CD8-positive, alpha-beta T cell (primary cell): ENCODE measurements at regions of chr9 and their contacts with region 1.

Region 1: DNA sequence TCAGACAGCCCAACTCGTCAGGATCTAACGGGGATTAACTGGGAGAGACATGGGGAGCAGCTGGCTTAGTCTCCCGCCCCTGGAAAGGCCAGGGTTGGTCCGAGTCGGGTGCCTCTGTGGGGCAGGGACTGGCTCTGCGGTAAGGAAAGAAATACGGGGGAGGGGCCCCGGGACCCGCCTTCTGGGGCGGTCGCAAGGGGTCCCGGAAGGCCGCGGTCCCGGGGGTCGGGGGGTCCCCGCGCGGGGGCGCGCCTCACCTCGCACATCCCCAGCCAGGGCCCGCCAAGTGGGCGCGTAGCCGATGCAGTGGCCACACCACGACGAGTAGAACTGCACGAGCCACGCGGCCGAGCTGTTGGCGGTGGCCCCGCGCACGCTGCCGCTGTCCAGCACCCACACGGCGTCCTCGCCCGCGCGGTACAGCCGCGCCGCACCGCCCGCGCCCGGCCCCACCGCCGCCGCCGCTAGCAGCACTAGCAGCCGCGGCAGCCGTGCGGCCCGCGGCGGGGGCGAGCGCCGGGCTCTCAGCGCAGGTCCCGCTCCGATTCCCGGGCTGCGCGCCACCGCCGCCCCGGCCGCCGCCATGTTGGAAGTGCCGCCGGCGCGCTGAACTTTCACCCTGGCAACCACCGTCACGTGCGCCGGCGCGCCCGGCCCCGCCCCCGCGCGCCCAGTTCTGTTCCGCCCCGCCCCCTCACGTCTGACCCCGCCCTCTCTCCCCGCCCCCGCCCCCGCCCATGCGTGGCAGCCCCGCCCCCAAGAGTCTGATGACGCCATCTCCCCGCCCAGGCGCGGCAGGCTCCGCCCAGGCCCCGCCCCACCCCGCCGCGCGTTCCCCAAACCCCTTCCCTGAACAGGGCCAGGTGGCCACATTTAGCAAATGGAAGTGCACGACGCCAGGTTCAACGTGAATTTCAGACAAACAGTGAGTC is at the start of gene QSOX2:
- DNase-seq: peak; percentile 69 to 93 (median 82)
- ATAC-seq: peak; percentile 84
- H3K4me3 ChIP-seq: peak within 1 kb of the TSS; percentile 40 to 60
- H3K4me3 Mint-ChIP-seq: peak within 1 kb of the TSS; percentile 91
- H3K27ac ChIP-seq: peak within 1 kb of the TSS; percentile 33 to 37
- H3K27ac Mint-ChIP-seq: peak within 1 kb of the TSS; percentile 85
- H3K4me1 ChIP-seq: peaks cover 35% of the 10 kb centered on the region
- H3K4me1 Mint-ChIP-seq: peaks cover 32% of the 10 kb centered on the region
- H3K27me3 ChIP-seq: no peaks in the 10 kb centered on the region
- H3K27me3 Mint-ChIP-seq: no peaks in the 10 kb centered on the region
- CTCF ChIP-seq: no peak
- total RNA-seq, gene QSOX2: 13.8 to 14.2 TPM

Region 2: GRCh38 chr9:135811801-135812200 is 433.7 kb before region 1 on chr9:
- CTCF ChIA-PET with region 1: no interaction called
- POLR2A ChIA-PET with region 1: no interaction called
- intact Hi-C with region 1: no loop called
- DNase-seq: no peak
- ATAC-seq: no peak
- H3K4me3 ChIP-seq: no peak overlapping the region
- H3K4me3 Mint-ChIP-seq: no peak overlapping the region
- H3K27ac ChIP-seq: no peak overlapping the region
- H3K27ac Mint-ChIP-seq: no peak overlapping the region
- H3K4me1 ChIP-seq: peaks cover 3% of the 10 kb centered on the region
- H3K4me1 Mint-ChIP-seq: peaks cover 3% of the 10 kb centered on the region
- H3K27me3 ChIP-seq: no peaks in the 10 kb centered on the region
- H3K27me3 Mint-ChIP-seq: no peaks in the 10 kb centered on the region
- CTCF ChIP-seq: no peak

Region 3: GRCh38 chr9:135907431-135908092 is 337.9 kb before region 1 on chr9 and contains the start of gene CAMSAP1:
- CTCF ChIA-PET with region 1: no interaction called
- POLR2A ChIA-PET with region 1: no interaction called
- intact Hi-C with region 1: loop called (anchors 1 to 5 kb)
- DNase-seq: peak; percentile 90 to 98 (median 96)
- ATAC-seq: peak; percentile 87
- H3K4me3 ChIP-seq: peak within 1 kb of the TSS; percentile 67 to 78
- H3K4me3 Mint-ChIP-seq: peak within 1 kb of the TSS; percentile 88
- H3K27ac ChIP-seq: peak within 1 kb of the TSS; percentile 21 to 71
- H3K27ac Mint-ChIP-seq: peak within 1 kb of the TSS; percentile 86
- H3K4me1 ChIP-seq: peaks cover 27% of the 10 kb centered on the region
- H3K4me1 Mint-ChIP-seq: peaks cover 48% of the 10 kb centered on the region
- H3K27me3 ChIP-seq: no peaks in the 10 kb centered on the region
- H3K27me3 Mint-ChIP-seq: no peaks in the 10 kb centered on the region
- CTCF ChIP-seq: no peak
- total RNA-seq, gene CAMSAP1: 16.4 to 20.8 TPM

Region 4: GRCh38 chr9:136109351-136110081 is 136.0 kb before region 1 on chr9:
- CTCF ChIA-PET with region 1: no interaction called
- POLR2A ChIA-PET with region 1: no interaction called
- intact Hi-C with region 1: loop called in 1 of 2 experiments (anchors 5 kb)
- DNase-seq: peak; percentile 77 to 95 (median 92)
- ATAC-seq: peak; percentile 91
- H3K4me3 ChIP-seq: peak overlapping the region; percentile 58 to 65
- H3K4me3 Mint-ChIP-seq: peak overlapping the region; percentile 83
- H3K27ac ChIP-seq: peak overlapping the region; percentile 28 to 84
- H3K27ac Mint-ChIP-seq: peak overlapping the region; percentile 84
- H3K4me1 ChIP-seq: peaks cover 93% of the 10 kb centered on the region
- H3K4me1 Mint-ChIP-seq: peaks cover 73% of the 10 kb centered on the region
- H3K27me3 ChIP-seq: no peaks in the 10 kb centered on the region
- H3K27me3 Mint-ChIP-seq: no peaks in the 10 kb centered on the region
- CTCF ChIP-seq: no peak

Region 5: GRCh38 chr9:136160381-136160841 is 85.1 kb before region 1 on chr9:
- CTCF ChIA-PET with region 1: no interaction called
- POLR2A ChIA-PET with region 1: no interaction called
- intact Hi-C with region 1: no loop called
- DNase-seq: no peak
- ATAC-seq: no peak
- H3K4me3 ChIP-seq: no peak overlapping the region
- H3K4me3 Mint-ChIP-seq: no peak overlapping the region
- H3K27ac ChIP-seq: no peak overlapping the region
- H3K27ac Mint-ChIP-seq: no peak overlapping the region
- H3K4me1 ChIP-seq: no peaks in the 10 kb centered on the region
- H3K4me1 Mint-ChIP-seq: no peaks in the 10 kb centered on the region
- H3K27me3 ChIP-seq: no peaks in the 10 kb centered on the region
- H3K27me3 Mint-ChIP-seq: peaks cover 18% of the 10 kb centered on the region
- CTCF ChIP-seq: no peak

Region 6: DNA sequence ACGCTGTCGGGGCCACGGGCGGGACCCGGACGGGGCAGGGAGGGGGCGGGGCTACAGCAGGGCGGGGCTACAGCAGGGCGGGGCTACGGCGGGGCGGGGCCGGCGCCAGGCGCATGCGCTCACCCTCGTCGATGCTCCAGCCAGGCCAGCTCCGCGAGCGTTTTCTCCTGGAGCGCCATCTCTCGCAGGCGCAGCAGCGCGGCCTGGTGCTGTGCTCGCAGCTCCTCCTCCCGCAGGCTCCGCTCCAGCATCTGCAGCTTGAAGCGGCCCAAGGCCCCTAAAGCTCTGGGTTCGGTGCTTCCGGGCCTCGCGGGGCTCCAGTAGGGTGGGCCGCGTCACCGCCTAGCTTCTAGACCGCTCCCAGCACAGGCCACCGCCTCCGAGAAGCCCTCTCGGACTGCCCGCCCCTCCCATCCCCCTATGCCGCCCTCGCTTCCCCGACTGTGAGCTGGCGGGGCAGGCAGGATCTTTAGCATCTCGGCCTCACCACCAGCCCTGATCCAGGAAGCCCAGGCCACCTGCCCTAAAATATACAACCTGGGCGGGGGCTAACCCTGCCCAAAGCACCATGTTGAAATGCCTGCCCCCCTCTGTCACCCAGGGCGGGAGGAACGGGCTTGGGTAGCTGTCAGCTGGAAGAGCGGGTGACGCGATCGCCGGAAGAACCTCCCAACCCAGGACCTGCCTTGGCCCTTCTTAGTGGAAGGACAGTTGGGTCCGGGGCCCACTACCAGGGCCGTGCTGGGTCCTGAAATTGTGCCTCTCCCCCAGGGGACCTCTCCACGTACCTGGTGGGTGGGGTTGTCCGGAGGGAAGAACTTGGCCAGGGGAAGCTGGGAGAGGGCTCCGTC is 22.0 kb after region 1 on chr9:
- CTCF ChIA-PET with region 1: interaction called, 4 read pairs
- POLR2A ChIA-PET with region 1: interaction called, 4 read pairs
- intact Hi-C with region 1: loop called in 1 of 2 experiments (anchors 1 kb)
- DNase-seq: peak; percentile 74 to 94 (median 85)
- ATAC-seq: peak; percentile 98
- H3K4me3 ChIP-seq: peak overlapping the region; percentile 74 to 80
- H3K4me3 Mint-ChIP-seq: peak overlapping the region; percentile 81
- H3K27ac ChIP-seq: peak overlapping the region; percentile 51 to 58
- H3K27ac Mint-ChIP-seq: peak overlapping the region; percentile 58
- H3K4me1 ChIP-seq: peaks cover 6% of the 10 kb centered on the region
- H3K4me1 Mint-ChIP-seq: peaks cover 6% of the 10 kb centered on the region
- H3K27me3 ChIP-seq: peaks cover 0 to 2% of the 10 kb centered on the region in 2 experiments
- H3K27me3 Mint-ChIP-seq: no peaks in the 10 kb centered on the region
- CTCF ChIP-seq: peak; percentile 18

Region 7: DNA sequence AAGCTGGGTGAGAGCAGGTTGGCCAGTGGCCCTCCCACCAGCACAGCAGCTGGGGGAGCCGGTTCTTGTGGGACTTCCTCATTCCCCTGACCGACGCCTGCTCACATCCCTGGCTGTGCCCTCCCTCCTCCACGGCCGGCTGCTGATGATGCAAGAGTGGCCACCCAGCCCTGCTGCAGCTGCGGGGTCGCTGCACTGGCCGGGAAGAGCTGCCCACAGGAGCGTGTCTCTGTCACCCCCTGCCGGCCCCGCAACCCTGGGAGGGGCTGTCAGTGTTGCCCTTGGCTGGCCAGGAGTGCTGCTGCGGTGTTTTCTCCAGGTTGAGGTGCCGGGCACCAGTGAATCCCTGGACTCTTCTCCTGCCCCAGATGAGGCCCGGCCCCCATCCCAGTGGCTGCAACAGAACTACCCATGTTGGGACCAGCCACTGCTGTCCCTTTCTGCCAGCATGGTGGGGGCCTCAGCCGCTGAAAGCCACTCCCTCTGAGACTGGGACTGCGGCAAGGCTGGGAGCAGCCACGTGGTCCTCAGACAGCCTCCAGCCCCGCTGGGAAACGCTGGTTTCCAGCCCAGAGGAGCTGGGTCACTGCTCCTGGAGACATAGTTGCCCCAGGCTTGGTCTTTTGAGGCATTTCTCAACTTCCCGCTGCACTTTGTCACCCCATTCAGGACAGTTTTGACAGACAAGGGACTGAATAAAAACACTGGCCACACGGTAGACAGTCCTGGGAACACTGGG is 127.2 kb after region 1 on chr9:
- CTCF ChIA-PET with region 1: no interaction called
- POLR2A ChIA-PET with region 1: no interaction called
- intact Hi-C with region 1: no loop called
- DNase-seq: no peak
- ATAC-seq: no peak
- H3K4me3 ChIP-seq: no peak overlapping the region
- H3K4me3 Mint-ChIP-seq: no peak overlapping the region
- H3K27ac ChIP-seq: no peak overlapping the region
- H3K27ac Mint-ChIP-seq: no peak overlapping the region
- H3K4me1 ChIP-seq: no peaks in the 10 kb centered on the region
- H3K4me1 Mint-ChIP-seq: peaks cover 7% of the 10 kb centered on the region
- H3K27me3 ChIP-seq: peaks cover 0 to 3% of the 10 kb centered on the region in 2 experiments
- H3K27me3 Mint-ChIP-seq: no peaks in the 10 kb centered on the region
- CTCF ChIP-seq: no peak

Region 8: DNA sequence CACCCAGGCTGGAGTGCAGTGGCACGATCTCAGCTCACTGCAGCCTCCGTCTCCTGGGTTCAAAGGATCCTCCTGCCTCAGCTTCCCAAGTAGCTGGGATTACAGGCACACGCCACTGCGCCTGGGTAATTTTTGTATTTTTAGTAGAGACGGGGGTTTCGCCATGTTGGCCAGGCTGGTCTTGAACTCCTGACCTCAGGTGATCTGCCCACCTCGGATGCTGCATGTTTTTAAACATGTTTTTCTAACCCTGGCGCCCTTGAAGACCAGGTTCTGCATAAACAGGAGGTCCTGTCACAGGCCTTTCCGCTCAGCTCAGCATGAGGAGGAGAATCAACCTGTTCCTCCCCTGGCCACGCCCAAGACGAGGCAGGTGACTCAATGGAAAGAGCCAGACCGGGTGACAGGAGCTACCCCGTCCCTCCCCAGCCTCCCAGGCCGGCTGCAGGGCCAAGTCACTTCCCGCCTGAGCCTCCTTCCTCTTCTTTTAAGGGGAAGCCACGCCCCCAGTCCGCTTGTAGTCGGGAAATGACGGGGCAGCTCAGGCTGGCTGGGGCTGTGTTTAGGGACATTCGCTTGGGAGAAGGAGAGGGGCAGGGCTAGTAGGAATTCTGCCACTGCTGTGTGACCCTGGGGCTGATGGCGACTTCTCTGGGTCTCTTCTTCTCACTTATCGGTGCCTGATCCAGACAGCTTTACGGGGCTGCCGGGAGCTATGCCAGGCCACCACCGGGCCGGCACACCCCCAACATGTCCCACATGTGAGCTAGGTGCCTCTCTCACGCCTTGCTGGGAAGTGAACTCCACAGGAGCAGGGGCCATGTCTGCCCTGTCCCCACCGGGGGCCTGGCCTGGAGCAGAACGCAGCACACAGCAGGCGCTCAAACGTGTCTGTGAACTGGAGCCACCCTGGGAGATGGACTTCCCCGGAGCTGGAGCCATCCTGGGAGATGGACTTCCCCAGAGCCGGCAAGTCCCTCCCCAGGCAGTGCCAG is 294.2 kb after region 1 on chr9:
- CTCF ChIA-PET with region 1: no interaction called
- POLR2A ChIA-PET with region 1: no interaction called
- intact Hi-C with region 1: loop called (anchors 2 to 5 kb)
- DNase-seq: peak; percentile 49 to 94 (median 86)
- ATAC-seq: peak; percentile 70
- H3K4me3 ChIP-seq: peak overlapping the region; percentile 30 to 58
- H3K4me3 Mint-ChIP-seq: peak overlapping the region; percentile 85
- H3K27ac ChIP-seq: peak overlapping the region; percentile 73 to 95
- H3K27ac Mint-ChIP-seq: peak overlapping the region; percentile 97
- H3K4me1 ChIP-seq: peaks cover 80% of the 10 kb centered on the region
- H3K4me1 Mint-ChIP-seq: peaks cover 59% of the 10 kb centered on the region
- H3K27me3 ChIP-seq: no peaks in the 10 kb centered on the region
- H3K27me3 Mint-ChIP-seq: no peaks in the 10 kb centered on the region
- CTCF ChIP-seq: no peak

Region 9: DNA sequence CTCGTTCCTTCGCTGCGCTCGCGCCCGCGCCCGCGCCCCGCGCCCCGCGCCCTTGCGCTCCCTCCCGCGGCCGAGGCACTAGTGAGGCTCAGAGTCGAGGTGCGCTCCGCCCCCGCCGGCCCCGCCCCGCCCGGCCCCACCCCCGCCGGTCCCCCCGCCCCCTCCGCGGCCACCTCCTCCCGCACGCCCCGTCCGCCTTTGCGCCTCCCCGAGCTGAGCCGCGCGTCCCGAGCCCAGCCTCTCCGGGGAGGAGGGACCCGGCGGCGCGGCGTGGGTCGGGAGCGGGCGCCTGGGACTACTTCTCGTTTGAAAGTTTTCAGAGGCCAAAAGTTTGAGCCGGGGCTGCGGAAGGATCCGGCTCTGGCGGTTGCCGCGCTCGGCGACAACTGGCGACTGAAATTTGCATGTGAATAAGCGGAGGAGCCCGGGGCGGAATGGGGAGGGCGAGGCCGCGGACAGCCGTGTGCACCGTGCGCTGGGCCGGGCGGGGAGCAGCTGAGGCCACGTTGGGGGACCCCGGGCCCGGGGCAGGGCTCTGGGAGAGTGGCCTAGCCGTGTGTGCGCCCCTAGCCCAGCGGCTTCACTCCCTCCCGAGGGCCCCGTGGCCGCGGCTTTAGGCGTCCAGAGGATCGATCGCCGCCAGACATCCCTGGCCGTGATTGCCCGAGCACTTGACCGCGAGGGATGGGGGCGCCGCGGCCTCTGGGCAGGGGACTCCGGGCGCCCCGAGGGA is 300.6 kb after region 1 on chr9 and contains the start of gene NOTCH1:
- CTCF ChIA-PET with region 1: no interaction called
- POLR2A ChIA-PET with region 1: no interaction called
- intact Hi-C with region 1: loop called in 1 of 2 experiments (anchors 2 kb)
- DNase-seq: peak; percentile 75 to 91 (median 83)
- ATAC-seq: peak; percentile 78
- H3K4me3 ChIP-seq: peak within 1 kb of the TSS; percentile 82 to 90
- H3K4me3 Mint-ChIP-seq: peak within 1 kb of the TSS; percentile 85
- H3K27ac ChIP-seq: peak within 1 kb of the TSS; percentile 50 to 55
- H3K27ac Mint-ChIP-seq: peak within 1 kb of the TSS; percentile 85
- H3K4me1 ChIP-seq: peaks cover 31% of the 10 kb centered on the region
- H3K4me1 Mint-ChIP-seq: peaks cover 27% of the 10 kb centered on the region
- H3K27me3 ChIP-seq: no peaks in the 10 kb centered on the region
- H3K27me3 Mint-ChIP-seq: no peaks in the 10 kb centered on the region
- CTCF ChIP-seq: no peak
- total RNA-seq, gene NOTCH1: 29.0 to 30.0 TPM

Region 10: DNA sequence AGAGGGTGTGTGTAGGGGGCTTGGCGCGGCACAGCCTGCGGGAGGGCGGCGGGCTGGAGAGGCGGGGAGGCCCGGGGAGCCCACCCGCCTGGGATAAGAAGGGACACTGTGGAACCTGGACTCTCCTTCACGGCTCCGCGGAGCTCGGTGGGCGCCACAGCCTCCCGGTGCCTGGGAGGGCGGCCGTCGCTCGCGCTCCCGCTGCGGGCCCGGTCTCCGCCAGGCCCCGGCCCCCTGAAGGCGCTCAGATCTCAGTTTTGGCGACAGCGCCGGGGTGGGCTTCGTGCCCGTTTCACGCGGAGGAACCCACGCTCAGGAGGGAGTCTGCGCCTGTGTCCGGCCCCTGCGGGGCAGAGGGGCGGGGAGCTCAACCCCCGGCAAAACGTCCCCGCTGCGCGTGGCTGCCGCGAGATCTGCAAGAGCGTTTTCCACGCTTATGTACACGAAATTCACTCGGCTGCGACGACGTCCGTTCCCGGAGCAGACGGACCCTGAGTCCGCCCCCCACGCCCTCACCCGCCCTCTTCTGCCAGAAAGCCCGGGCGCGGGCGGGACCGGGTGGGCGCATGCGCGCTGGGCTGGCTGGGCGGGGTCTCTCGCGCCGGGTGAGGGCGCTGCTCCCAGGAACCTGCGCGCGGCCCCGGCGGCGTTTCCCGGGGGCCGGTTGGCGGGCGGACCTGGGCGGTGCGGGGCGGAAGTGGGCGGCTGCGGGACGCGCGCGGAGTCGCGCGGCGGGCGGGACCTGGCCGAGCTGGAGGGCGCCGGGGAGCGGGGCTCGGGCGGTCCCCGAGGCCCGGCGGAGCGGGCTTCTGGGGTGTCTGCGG is 1009.4 kb after region 1 on chr9 and contains the start of gene NELFB:
- CTCF ChIA-PET with region 1: no interaction called
- POLR2A ChIA-PET with region 1: no interaction called
- intact Hi-C with region 1: loop called in 1 of 2 experiments (anchors 10 kb)
- DNase-seq: peak; percentile 91 to 99 (median 95)
- ATAC-seq: peak; percentile 92
- H3K4me3 ChIP-seq: peak within 1 kb of the TSS; percentile 81 to 83
- H3K4me3 Mint-ChIP-seq: peak within 1 kb of the TSS; percentile 88
- H3K27ac ChIP-seq: peak within 1 kb of the TSS; percentile 12 to 38
- H3K27ac Mint-ChIP-seq: peak within 1 kb of the TSS; percentile 73
- H3K4me1 ChIP-seq: peaks cover 18% of the 10 kb centered on the region
- H3K4me1 Mint-ChIP-seq: peaks cover 15% of the 10 kb centered on the region
- H3K27me3 ChIP-seq: no peaks in the 10 kb centered on the region
- H3K27me3 Mint-ChIP-seq: no peaks in the 10 kb centered on the region
- CTCF ChIP-seq: no peak
- total RNA-seq, gene NELFB: 17.1 to 17.6 TPM